ENCODE measurements at regions of chr18 and their contacts with region 1.

Region 1: GRCh38 chr18:23586249-23587196 is at the start of gene NPC1:
- DNase-seq: peak; percentile 91
- H3K4me3 Mint-ChIP-seq: peak within 1 kb of the TSS; percentile 91
- H3K27ac Mint-ChIP-seq: peak within 1 kb of the TSS; percentile 95
- H3K4me1 Mint-ChIP-seq: peaks cover 34% of the 10 kb centered on the region
- H3K27me3 Mint-ChIP-seq: no peaks in the 10 kb centered on the region
- total RNA-seq, gene NPC1: 25.9 to 27.9 TPM

Region 2: GRCh38 chr18:23131693-23132319 is 454.7 kb before region 1 on chr18:
- CTCF ChIA-PET with region 1: no interaction called
- intact Hi-C with region 1: loop called (anchors 5 kb)
- DNase-seq: peak; percentile 75
- H3K4me3 Mint-ChIP-seq: no peak overlapping the region
- H3K27ac Mint-ChIP-seq: no peak overlapping the region
- H3K4me1 Mint-ChIP-seq: peaks cover 14% of the 10 kb centered on the region
- H3K27me3 Mint-ChIP-seq: peaks cover 28% of the 10 kb centered on the region

Region 3: DNA sequence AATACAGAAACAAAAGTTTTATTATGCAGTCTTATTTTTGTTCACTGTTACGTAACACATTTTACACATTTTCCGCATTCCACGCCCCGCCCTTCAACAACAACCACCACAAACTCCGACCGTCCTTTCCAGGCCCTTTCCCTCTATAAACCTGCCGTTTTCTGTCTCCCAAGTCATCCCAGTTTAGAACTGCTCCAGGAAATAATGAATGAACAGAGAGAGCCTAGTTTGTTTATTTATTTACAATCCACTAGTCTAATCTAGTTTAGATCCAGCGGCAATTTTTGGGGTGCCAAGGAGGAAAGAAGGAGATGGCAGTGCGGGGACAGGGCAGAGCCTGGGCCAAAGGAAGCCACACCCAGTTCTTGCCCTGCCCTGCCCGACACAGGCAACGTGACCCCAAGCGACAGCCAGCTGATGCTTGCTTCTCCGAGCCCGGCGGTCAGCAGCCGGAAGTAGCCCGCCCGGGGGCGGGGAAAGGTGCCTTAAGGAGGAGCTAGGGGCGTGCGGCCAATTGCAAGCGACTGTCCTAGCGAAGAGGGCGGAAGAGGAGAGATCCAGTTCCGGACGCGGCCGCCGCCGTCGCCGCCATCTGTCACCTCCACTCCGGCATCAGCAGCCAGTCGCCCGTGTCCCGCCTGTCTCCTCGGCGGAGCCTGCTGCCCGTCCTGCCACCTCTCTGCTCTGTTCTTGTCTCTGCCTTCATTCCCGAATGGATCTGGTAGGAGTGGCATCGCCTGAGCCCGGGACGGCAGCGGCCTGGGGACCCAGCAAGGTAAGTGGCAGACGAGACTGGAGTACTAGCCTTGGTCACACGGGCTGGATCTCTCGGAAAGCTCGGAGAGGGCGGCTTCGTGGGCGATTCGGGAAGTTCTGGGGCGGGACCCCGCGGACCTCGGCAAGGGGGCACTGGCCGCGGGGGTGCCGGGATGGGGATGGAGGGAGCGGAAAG is 133.5 kb before region 1 on chr18 and contains the start of gene RIOK3:
- CTCF ChIA-PET with region 1: no interaction called
- intact Hi-C with region 1: loop called (anchors 1 kb)
- DNase-seq: peak; percentile 94
- H3K4me3 Mint-ChIP-seq: peak within 1 kb of the TSS; percentile 99
- H3K27ac Mint-ChIP-seq: peak within 1 kb of the TSS; percentile 91
- H3K4me1 Mint-ChIP-seq: peaks cover 42% of the 10 kb centered on the region
- H3K27me3 Mint-ChIP-seq: no peaks in the 10 kb centered on the region
- total RNA-seq, gene RIOK3: 53.8 to 59.5 TPM

Region 4: DNA sequence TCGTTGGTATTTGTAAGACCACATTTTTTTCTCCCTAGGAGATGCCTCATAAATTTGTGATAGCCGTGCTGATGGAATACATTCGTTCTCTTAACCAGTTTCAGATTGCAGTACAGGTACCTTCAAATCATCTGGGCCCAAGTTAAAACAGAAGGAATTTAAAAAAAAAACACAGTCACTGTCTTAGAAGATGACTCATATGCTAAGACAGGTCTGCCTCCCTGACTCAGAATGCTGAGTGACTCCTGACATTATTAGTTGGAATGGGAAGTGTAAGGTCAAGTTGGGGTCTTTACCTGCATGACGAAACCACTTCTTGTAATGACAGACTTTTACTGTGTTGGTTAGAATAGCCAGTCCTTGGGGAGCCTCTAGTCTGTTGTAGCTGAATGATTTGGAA is 56.9 kb before region 1 on chr18:
- CTCF ChIA-PET with region 1: no interaction called
- intact Hi-C with region 1: loop called (anchors 1 kb)
- DNase-seq: peak; percentile 36
- H3K4me3 Mint-ChIP-seq: no peak overlapping the region
- H3K27ac Mint-ChIP-seq: peak overlapping the region; percentile 20
- H3K4me1 Mint-ChIP-seq: peaks cover 16% of the 10 kb centered on the region
- H3K27me3 Mint-ChIP-seq: no peaks in the 10 kb centered on the region

Region 5: DNA sequence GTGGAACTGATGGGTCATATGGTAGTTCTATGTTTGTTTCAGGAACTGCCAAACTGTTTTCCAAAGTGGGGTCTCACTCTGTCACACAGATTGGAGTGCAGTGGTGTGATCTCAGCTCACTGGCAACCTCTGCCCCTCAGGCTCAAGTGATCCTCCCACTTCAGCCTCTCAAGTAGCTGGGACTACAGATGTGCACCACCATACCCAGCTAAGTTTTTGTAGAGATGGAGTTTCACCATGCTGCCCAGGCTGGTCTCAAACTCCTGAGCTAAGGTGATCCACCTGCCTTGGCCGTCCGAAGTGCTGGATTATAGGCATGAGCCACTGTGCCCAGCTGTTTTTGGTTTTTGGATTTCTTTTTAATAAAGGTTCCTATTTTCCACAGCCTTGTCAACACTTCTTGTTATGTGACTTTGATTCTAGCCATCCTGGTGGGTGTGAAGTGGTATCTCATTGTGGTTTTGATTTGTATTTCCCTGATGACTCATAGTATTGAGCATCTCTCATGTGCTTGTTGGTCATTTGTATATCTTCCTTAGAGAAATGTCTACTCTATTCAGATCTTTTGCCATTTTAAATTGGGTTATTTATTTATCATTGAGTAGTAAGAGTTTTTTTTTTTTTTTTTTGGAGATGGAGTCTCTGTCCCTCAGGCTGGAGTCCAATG is 23.0 kb before region 1 on chr18:
- CTCF ChIA-PET with region 1: interaction called, 6 read pairs
- intact Hi-C with region 1: loop called (anchors 1 kb)
- DNase-seq: no peak
- H3K4me3 Mint-ChIP-seq: no peak overlapping the region
- H3K27ac Mint-ChIP-seq: no peak overlapping the region
- H3K4me1 Mint-ChIP-seq: peaks cover 7% of the 10 kb centered on the region
- H3K27me3 Mint-ChIP-seq: no peaks in the 10 kb centered on the region

Region 6: GRCh38 chr18:23703057-23703986 is 116.8 kb after region 1 on chr18:
- CTCF ChIA-PET with region 1: interaction called, 4 read pairs
- intact Hi-C with region 1: loop called (anchors 1 kb)
- DNase-seq: peak; percentile 26
- H3K4me3 Mint-ChIP-seq: no peak overlapping the region
- H3K27ac Mint-ChIP-seq: no peak overlapping the region
- H3K4me1 Mint-ChIP-seq: no peaks in the 10 kb centered on the region
- H3K27me3 Mint-ChIP-seq: peaks cover 8% of the 10 kb centered on the region